Common myeloid progenitor, CD34-positive (primary cell): ENCODE measurements at regions of chr1 and their contacts with region 1.

Region 1: GRCh38 chr1:201468844-201469511 is at the start of gene PHLDA3:
- DNase-seq: peak; percentile 70 to 92 (median 90)
- H3K4me3 ChIP-seq: peak within 1 kb of the TSS; percentile 22 to 78 (median 63)
- H3K27ac ChIP-seq: no peak within 1 kb of the TSS
- H3K4me1 ChIP-seq: peaks cover 0 to 25% (median 20%) of the 10 kb centered on the region in 4 experiments
- H3K27me3 ChIP-seq: peaks cover 0 to 11% (median 5%) of the 10 kb centered on the region in 5 experiments

Region 2: DNA sequence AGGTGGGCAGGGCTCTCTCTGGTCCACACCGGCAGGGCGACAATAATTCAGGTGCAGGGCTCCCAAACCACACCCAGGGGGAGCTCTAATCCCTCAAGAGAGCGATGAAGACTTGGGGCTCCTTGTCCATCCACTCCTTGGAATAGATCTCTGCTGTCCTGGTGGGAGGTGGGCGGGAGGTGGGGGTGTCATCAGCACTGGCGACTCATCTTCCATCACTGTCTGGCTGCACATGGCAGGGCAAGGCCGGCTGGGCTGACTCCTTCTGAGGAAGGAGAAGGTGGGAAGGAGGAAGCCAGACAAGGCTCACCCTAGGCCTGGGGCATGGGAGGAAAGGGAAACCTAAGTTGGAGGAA is 120.8 kb before region 1 on chr1:
- CTCF ChIA-PET with region 1: no interaction called
- POLR2A ChIA-PET with region 1: no interaction called
- DNase-seq: peak; percentile 40 to 64 (median 50)
- H3K4me3 ChIP-seq: no peak overlapping the region
- H3K27ac ChIP-seq: no peak overlapping the region
- H3K4me1 ChIP-seq: no peaks in the 10 kb centered on the region
- H3K27me3 ChIP-seq: peaks cover 0 to 19% (median 7%) of the 10 kb centered on the region in 5 experiments

Region 3: GRCh38 chr1:201436393-201436792 is 32.6 kb before region 1 on chr1:
- CTCF ChIA-PET with region 1: interaction called, 353 read pairs
- POLR2A ChIA-PET with region 1: no interaction called
- DNase-seq: no peak
- H3K4me3 ChIP-seq: no peak overlapping the region
- H3K27ac ChIP-seq: no peak overlapping the region
- H3K4me1 ChIP-seq: peaks cover 0 to 5% (median 3%) of the 10 kb centered on the region in 4 experiments
- H3K27me3 ChIP-seq: peaks cover 0 to 3% (median 0%) of the 10 kb centered on the region in 5 experiments

Region 4: DNA sequence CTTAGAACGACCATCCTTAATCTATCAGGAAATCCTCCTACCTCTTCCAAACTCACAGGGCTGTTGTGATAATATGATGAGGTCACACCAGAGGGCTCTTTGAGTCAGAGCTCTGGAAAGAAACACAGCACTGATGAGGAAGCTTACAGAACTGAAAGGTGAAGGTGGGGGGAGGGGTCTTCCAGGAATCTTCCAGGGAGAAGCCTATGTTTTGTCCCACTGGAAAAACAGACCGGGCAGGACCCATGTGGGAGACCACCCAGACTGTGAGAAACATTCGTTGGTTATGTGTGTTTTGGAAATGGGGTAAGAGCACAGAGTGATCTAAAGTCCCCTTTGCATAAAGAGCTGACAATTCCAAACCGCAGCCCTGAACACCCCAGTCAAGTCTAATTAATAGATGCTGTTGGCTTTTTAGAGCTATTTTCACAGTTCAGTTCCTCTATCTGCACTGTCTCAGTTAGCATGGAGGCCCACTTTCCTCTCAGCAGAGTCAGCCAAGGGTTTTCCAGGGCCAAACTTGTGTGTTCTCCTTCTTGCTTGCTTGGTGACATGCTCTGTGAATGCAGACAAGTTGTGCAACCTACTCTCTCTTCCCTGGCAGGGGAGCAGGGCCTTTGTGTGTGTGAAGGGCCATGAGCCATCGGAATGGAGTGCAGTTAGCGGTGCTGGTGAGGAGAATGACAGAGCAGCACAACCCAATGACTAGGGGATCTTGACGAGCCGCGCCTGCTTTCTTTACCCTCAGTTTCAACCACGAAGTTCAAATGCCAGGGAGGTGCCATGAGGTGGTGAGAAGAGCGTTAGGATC is 12.3 kb before region 1 on chr1:
- CTCF ChIA-PET with region 1: interaction called, 353 read pairs
- POLR2A ChIA-PET with region 1: no interaction called
- DNase-seq: peak in 2 of 3 donors; percentile 77 to 81
- H3K4me3 ChIP-seq: no peak overlapping the region
- H3K27ac ChIP-seq: no peak overlapping the region
- H3K4me1 ChIP-seq: peaks cover 0 to 26% (median 10%) of the 10 kb centered on the region in 4 experiments
- H3K27me3 ChIP-seq: no peaks in the 10 kb centered on the region

Region 5: DNA sequence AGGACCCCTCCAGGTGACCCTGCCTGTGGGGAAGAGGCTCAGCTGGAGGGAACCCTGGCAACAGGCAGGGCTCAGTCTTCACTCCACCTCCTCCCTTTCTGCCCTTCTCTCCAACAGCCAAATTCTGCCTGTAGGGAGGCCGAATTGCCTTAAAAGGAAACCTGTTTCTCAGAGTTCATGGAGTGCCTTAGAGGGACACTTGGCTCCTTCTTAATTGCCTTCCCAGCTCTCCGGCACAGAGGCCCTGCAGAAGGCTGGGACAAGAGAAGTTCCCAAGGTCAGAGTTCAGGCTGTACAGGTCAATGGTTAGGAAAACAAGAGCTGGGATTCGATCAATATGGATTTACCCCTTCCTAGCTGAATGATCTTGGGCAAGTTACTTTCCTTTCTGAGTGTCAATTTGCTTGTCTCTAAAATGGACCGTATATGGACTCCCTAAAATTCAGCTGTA is 31.7 kb after region 1 on chr1:
- CTCF ChIA-PET with region 1: no interaction called
- POLR2A ChIA-PET with region 1: no interaction called
- DNase-seq: no peak
- H3K4me3 ChIP-seq: no peak overlapping the region
- H3K27ac ChIP-seq: no peak overlapping the region
- H3K4me1 ChIP-seq: peaks cover 0 to 25% (median 17%) of the 10 kb centered on the region in 4 experiments
- H3K27me3 ChIP-seq: no peaks in the 10 kb centered on the region